Activated CD8-positive, alpha-beta memory T cell treated with anti-CD3 and anti-CD28 coated beads, Interleukin-2, amount 10 ng/mL, durations not matched to agents 7 days and 5 days (primary cell): ENCODE measurements at regions of chr3 and their contacts with region 1.

Region 1: GRCh38 chr3:27681245-27681748 is 40.8 kb downstream of the EOMES start:
- DNase-seq: no peak
- ATAC-seq: peak; percentile 83
- H3K4me3 Mint-ChIP-seq: peak overlapping the region; percentile 41
- H3K27ac Mint-ChIP-seq: peak overlapping the region; percentile 70
- H3K4me1 Mint-ChIP-seq: peaks cover 10% of the 10 kb centered on the region
- H3K27me3 Mint-ChIP-seq: peaks cover 2% of the 10 kb centered on the region

Region 2: DNA sequence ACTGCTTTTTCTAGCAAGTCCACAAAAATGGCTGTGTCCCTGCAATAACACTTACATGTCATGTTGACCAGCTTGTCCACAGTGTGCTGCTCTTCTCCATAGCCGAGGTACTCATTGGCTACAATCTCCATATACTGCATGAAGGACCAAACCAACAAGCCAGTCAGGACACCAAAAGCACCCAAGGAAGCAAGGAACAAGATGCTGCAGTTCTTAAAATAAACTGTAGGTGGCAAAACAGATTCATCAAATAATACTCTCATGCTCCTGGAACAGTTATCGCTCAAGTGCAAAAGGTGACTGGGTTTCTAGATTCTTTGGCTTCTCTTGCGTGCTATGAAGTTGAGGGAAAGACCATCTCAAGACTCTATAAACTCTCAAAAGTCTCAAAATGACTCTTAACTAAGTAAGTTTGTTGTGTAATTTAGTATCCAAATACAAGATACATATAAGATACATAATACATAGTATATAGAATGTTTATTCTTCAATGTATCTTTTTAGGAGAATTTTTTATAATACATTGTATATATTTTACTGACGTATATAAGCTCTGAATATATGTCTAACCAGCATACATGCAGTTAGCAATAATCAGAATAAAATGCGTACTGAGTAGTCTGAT is 369.1 kb before region 1 on chr3:
- CTCF ChIA-PET with region 1: interaction called, 12 read pairs
- DNase-seq: no peak
- ATAC-seq: peak; percentile 64
- H3K4me3 Mint-ChIP-seq: no peak overlapping the region
- H3K27ac Mint-ChIP-seq: no peak overlapping the region
- H3K4me1 Mint-ChIP-seq: peaks cover 4% of the 10 kb centered on the region
- H3K27me3 Mint-ChIP-seq: peaks cover 5% of the 10 kb centered on the region

Region 3: GRCh38 chr3:27349832-27350231 is 331.5 kb before region 1 on chr3:
- CTCF ChIA-PET with region 1: interaction called, 12 read pairs
- DNase-seq: peak; percentile 49
- ATAC-seq: peak; percentile 41
- H3K4me3 Mint-ChIP-seq: peak overlapping the region; percentile 63
- H3K27ac Mint-ChIP-seq: peak overlapping the region; percentile 82
- H3K4me1 Mint-ChIP-seq: peaks cover 24% of the 10 kb centered on the region
- H3K27me3 Mint-ChIP-seq: peaks cover 2% of the 10 kb centered on the region

Region 4: DNA sequence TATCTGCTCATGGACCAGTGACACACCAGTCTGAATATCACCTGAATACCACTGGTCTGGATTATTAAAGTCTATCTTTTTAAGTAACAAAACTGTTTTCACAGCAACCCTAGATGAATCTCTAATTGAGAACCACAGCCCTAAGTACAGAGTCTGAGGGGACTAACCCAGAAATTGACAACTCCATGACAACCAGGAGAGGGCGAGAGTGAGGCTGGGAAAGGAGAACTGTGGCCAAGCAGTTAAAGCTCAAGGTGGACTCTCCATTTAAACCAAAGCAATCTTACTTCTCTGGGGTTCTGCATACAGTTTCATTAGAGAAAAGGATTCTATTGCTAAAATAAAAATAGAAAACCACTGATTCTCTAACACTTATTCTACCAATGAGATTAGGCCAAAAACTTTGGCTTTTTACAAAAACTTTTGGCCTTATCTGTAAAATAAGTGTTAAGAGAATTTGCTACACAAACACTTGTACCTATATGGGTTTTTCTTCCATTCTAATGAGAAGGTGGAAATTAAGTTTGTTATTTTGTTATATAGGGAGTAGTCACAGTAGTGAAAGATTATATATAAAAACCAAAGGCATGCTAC is 323.5 kb before region 1 on chr3:
- CTCF ChIA-PET with region 1: interaction called, 13 read pairs
- DNase-seq: peak; percentile 80
- ATAC-seq: peak; percentile 97
- H3K4me3 Mint-ChIP-seq: no peak overlapping the region
- H3K27ac Mint-ChIP-seq: no peak overlapping the region
- H3K4me1 Mint-ChIP-seq: peaks cover 27% of the 10 kb centered on the region
- H3K27me3 Mint-ChIP-seq: peaks cover 2% of the 10 kb centered on the region

Region 5: GRCh38 chr3:27467545-27467944 is 213.8 kb before region 1 on chr3:
- CTCF ChIA-PET with region 1: interaction called, 11 read pairs
- DNase-seq: no peak
- ATAC-seq: peak; percentile 90
- H3K4me3 Mint-ChIP-seq: no peak overlapping the region
- H3K27ac Mint-ChIP-seq: peak overlapping the region; percentile 21
- H3K4me1 Mint-ChIP-seq: peaks cover 8% of the 10 kb centered on the region
- H3K27me3 Mint-ChIP-seq: no peaks in the 10 kb centered on the region

Region 6: DNA sequence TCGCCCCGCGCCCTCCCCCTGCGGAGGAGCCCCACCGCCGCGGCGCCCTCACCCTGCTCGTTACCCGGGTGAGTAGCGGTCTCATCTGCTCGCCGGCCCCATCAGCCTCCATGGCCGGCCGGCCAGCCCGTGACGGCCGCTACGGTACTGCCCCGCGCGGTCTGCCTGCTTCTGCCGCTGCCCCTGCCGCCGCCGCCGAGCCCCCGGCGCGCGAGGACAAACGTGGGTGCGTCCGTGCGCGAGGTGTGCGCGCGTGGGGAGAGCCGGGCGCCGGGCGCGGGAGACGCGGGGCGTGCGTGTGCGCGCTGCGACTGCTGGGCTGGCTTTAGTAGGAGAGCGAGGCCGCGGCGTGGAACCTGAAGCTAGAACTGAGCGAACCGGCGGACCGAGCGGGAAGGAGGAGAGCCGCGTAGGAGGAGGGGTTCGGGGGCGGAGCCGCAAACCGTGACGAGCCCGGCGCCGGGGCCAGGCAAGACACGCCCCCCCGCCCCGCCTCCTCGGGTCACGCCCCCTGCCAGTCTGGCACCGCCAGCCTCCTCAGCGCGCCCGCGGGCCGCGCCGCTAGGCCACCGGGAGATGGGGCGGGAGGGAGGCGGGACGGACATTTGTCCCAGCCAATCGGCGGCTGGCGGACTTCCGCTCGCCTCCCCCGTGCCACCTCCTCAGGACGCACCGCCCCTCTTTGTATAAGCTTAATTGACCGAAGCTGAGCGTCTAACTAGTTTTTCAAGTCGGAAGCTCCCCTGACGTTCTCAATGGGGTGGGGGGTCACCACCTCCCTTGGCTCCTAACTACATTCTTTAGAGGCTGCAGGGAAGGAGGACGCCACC is 197.1 kb before region 1 on chr3 and contains the start of gene SLC4A7:
- CTCF ChIA-PET with region 1: interaction called, 16 read pairs
- DNase-seq: peak; percentile 98
- ATAC-seq: peak; percentile 92
- H3K4me3 Mint-ChIP-seq: peak within 1 kb of the TSS; percentile 94
- H3K27ac Mint-ChIP-seq: peak within 1 kb of the TSS; percentile 97
- H3K4me1 Mint-ChIP-seq: peaks cover 42% of the 10 kb centered on the region
- H3K27me3 Mint-ChIP-seq: no peaks in the 10 kb centered on the region
- total RNA-seq, gene SLC4A7: 55.0 to 57.5 TPM

Region 7: DNA sequence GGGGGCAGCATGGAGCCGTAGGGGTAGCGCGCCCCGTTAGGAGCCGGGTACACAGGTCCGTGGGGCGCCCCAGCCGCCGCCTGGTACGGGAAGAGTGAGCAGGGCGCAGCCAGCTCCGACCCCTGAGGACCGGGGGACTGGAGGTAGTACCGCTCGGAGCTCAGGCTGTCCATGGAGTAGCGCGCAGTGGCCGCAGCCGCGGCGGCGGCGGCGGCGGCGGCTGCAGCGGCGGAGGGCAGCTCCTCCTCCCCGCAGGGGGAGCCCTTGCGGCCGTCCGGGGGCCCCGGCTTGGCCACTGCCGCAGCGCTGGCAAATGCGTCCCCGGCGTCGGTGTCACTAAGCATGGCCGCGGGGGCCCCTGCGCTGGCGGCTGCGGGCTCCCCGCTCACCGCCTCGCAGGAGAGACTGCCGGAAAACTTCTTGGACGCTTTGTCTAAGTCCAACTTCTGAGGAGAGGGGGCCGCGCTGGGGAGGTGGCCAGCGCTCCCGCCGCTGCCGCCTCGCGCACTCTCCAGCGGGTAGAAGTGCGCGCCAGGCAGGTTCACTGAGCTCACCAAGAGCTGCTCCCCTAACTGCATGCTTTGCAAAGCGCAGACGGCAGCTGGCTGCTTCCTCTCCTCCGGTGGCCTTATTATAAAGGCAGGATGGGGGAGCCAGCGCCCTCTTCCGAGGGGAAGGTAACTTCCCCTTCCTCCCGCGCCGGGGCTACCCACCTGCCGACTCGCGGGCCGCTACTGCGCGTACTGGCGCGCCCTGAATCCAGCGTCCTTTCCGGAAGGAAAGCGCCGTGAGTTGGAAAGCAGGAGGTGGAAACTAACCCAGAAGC is 40.6 kb after region 1 on chr3 and contains the start of gene EOMES:
- CTCF ChIA-PET with region 1: interaction called, 14 read pairs
- DNase-seq: peak; percentile 86
- ATAC-seq: peak; percentile 74
- H3K4me3 Mint-ChIP-seq: peak within 1 kb of the TSS; percentile 81
- H3K27ac Mint-ChIP-seq: peak within 1 kb of the TSS; percentile 84
- H3K4me1 Mint-ChIP-seq: peaks cover 42% of the 10 kb centered on the region
- H3K27me3 Mint-ChIP-seq: peaks cover 48% of the 10 kb centered on the region
- total RNA-seq, gene EOMES: 7.3 to 12.5 TPM